Activated CD4-positive, alpha-beta memory T cell treated with anti-CD3 and anti-CD28 coated beads, Interleukin-2, amount 10 ng/mL, durations not matched to agents 7 days and 5 days (primary cell): ENCODE measurements at regions of chr7 and their contacts with region 1.

Region 1: DNA sequence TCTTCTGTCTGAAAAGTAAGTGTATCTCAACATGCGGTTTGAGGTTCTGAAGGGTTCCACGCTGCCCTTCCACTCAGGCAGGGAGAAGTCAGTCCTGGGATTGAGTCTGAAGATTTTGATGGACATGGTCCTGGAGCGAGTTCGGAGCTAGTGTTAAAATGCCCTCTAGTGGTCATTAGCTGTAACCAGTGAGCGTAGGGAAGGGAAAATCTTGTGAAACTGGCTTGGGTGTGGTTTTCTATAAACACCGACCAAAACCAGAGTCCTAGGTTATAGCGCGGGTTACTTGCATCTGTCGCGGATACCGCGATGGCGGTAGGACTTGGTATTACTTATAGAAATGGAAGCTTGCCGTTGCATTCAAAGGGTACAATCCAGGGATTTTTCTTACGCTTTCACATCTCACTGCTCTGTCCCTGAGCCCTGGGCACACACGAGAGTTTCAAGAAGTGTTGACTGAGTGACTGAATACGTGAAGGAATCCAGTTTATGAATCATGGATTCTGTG is 348.2 kb upstream of the C7orf33 start:
- DNase-seq: no peak
- H3K4me3 Mint-ChIP-seq: no peak overlapping the region
- H3K27ac Mint-ChIP-seq: no peak overlapping the region
- H3K4me1 Mint-ChIP-seq: no peaks in the 10 kb centered on the region
- H3K27me3 Mint-ChIP-seq: peaks cover 23% of the 10 kb centered on the region

Region 2: GRCh38 chr7:148262721-148263229 is 20.4 kb after region 1 on chr7:
- CTCF ChIA-PET with region 1: interaction called, 18 read pairs
- POLR2A ChIA-PET with region 1: no interaction called
- DNase-seq: peak; percentile 55
- H3K4me3 Mint-ChIP-seq: no peak overlapping the region
- H3K27ac Mint-ChIP-seq: no peak overlapping the region
- H3K4me1 Mint-ChIP-seq: peaks cover 1% of the 10 kb centered on the region
- H3K27me3 Mint-ChIP-seq: peaks cover 9% of the 10 kb centered on the region